H1 (cell line): ENCODE measurements at regions of chr12 and their contacts with region 1.

Region 1: DNA sequence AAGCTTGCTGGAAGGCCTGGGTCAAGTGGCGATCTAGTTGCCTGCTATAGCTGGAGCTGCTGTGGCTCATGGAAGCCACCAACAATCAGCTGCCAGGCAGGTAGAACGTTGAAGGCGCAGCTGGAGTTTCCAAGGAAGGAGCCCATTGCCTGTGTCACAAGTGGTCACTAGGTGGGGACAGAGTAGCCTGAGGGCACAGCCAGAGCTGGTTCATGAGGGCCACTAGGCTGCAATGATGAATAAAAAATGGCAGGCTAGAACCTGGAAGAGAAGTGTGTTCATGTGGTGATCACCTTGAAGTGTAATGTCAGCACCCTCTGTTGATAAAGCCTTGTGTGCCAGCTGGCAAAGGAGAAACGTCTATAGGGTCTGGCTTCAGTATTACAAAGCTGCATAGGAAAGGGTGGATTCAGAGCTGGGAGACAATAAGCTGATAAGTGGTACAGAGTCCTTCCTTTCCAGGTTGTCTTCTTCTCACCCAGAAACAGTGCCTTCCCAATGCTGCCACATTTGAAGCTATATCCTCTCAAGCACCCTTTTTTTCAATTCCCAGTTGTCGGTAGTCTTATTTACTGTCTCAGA is 165.8 kb downstream of the EMP1 start:
- DNase-seq: peak; percentile 49 to 84
- H3K4me3 ChIP-seq: no peak overlapping the region
- H3K27ac ChIP-seq: no peak overlapping the region
- H3K4me1 ChIP-seq: no peaks in the 10 kb centered on the region
- H3K27me3 ChIP-seq: no peaks in the 10 kb centered on the region
- CTCF ChIP-seq: peak; percentile 84 to 96 (median 92)
- EP300 ChIP-seq: no peak
- POLR2A ChIP-seq: no peak
- RAD21 ChIP-seq: peak; percentile 80 to 89

Region 2: DNA sequence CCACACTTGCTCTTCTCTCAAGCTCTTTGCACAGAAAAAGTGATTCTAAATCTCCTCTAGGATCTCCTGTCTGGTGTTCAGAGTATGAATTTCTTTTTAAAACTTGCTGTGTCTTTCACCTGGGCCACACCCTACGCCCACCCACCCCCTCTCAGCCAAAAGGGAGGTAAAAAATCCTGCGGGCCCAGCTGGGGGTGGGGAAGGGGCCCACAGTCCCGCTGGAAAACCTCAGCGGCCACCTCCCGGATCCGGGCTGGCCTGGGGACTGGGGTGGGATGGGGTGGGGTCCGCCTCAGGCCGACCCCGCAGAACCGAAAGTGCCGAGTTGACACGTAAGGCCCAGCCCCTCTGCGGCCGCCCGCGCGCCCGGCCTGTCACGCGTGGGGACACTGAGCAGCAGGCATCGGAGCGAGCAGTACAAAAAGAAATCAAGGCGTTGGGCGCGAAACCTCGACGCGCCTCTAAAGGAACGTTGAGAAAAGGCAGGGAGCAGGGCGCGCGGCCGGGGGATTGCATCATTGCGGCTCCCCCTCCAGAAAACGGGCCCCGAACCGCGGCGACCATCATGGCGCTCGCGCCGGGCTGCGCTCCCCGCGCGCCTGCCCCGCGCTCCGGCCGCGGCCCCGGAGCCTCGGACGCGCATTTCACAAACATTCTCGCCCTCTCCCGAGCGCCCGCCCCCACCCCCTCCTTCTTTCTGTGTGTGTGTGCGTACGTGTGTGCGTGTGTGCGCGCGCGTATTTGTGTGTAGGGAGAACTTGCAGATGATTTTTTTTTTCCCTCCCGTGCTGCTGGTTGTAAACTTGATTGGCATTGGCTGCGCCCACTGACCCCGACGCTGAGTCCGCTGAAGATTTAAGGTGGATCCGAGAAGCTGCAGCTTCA is 637.4 kb before region 1 on chr12:
- CTCF ChIA-PET with region 1: no interaction called
- POLR2A ChIA-PET with region 1: no interaction called
- DNase-seq: peak in 1 of 2 experiments; percentile 84
- H3K4me3 ChIP-seq: peak overlapping the region; percentile 74 to 98 (median 88)
- H3K27ac ChIP-seq: peak overlapping the region; percentile 88
- H3K4me1 ChIP-seq: peaks cover 0 to 8% (median 0%) of the 10 kb centered on the region in 4 experiments; a peak in 4 of 7 replicates
- H3K27me3 ChIP-seq: peaks cover 0 to 2% (median 0%) of the 10 kb centered on the region in 4 experiments; a peak in 1 of 7 replicates
- CTCF ChIP-seq: peak in 1 of 3 experiments; percentile 8; a peak in 1 of 4 replicates
- EP300 ChIP-seq: peak in 1 of 2 experiments; percentile 41; a peak in 1 of 3 replicates
- POLR2A ChIP-seq: peak; percentile 59 to 90
- RAD21 ChIP-seq: no peak

Region 3: DNA sequence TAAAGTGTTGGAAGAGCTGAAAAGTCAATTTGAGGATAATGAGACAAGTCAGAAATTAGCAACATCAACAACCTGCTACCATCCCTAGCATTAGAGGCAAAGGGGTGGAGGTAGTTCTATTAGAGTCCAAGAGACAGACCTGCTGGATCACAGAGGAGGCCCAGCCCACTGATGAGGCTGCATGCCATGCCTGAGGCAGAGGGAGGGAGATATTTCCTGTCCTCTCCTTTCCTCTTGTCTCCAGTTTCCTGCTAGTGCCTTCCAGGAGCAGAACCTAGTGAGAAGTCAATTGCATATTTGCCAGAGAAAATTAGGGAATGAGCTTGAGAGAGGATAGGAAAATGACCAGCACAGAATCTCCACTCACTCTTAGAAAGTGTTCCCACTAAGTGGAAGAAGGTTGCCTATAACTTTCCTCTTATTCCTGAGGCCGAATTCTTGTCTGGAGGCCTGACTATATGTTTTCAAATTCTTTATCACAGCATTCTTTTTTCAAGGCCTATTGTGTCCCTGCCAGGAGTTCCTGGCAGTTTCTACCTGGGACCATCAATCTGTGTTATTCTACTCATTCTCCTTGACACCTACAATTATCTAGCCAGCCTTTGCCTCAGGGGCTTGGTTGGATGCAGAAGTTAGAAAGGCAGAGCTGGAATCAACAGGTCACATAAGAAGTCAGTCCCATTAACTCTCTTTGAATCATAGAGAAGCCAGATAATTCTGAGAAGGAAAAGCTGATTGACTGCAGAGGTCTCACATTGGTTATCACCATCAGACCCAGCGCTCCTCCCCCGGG is 43.9 kb before region 1 on chr12:
- CTCF ChIA-PET with region 1: interaction called, 13 read pairs
- POLR2A ChIA-PET with region 1: no interaction called
- DNase-seq: no peak
- H3K4me3 ChIP-seq: no peak overlapping the region
- H3K27ac ChIP-seq: no peak overlapping the region
- H3K4me1 ChIP-seq: peaks cover 1 to 6% (median 4%) of the 10 kb centered on the region in 4 experiments; a peak in 3 of 7 replicates
- H3K27me3 ChIP-seq: peaks cover 0 to 1% (median 0%) of the 10 kb centered on the region in 4 experiments; a peak in 1 of 7 replicates
- CTCF ChIP-seq: no peak
- EP300 ChIP-seq: no peak
- POLR2A ChIP-seq: no peak
- RAD21 ChIP-seq: no peak

Region 4: GRCh38 chr12:13328535-13328934 is 33.8 kb before region 1 on chr12:
- CTCF ChIA-PET with region 1: interaction called, 11 read pairs
- POLR2A ChIA-PET with region 1: no interaction called
- DNase-seq: no peak
- H3K4me3 ChIP-seq: no peak overlapping the region
- H3K27ac ChIP-seq: no peak overlapping the region
- H3K4me1 ChIP-seq: no peaks in the 10 kb centered on the region
- H3K27me3 ChIP-seq: no peaks in the 10 kb centered on the region
- CTCF ChIP-seq: no peak
- EP300 ChIP-seq: no peak
- POLR2A ChIP-seq: no peak
- RAD21 ChIP-seq: no peak

Region 5: GRCh38 chr12:13347241-13348043 is 14.9 kb before region 1 on chr12:
- CTCF ChIA-PET with region 1: interaction called, 14 read pairs
- POLR2A ChIA-PET with region 1: no interaction called
- DNase-seq: no peak
- H3K4me3 ChIP-seq: no peak overlapping the region
- H3K27ac ChIP-seq: no peak overlapping the region
- H3K4me1 ChIP-seq: no peaks in the 10 kb centered on the region
- H3K27me3 ChIP-seq: no peaks in the 10 kb centered on the region
- CTCF ChIP-seq: no peak
- EP300 ChIP-seq: no peak
- POLR2A ChIP-seq: no peak
- RAD21 ChIP-seq: no peak

Region 6: GRCh38 chr12:13374793-13375192 is 12.4 kb after region 1 on chr12:
- CTCF ChIA-PET with region 1: interaction called, 33 read pairs
- POLR2A ChIA-PET with region 1: no interaction called
- DNase-seq: peak in 1 of 2 experiments; percentile 14
- H3K4me3 ChIP-seq: no peak overlapping the region
- H3K27ac ChIP-seq: no peak overlapping the region
- H3K4me1 ChIP-seq: peaks cover 0 to 2% (median 1%) of the 10 kb centered on the region in 4 experiments; a peak in 2 of 7 replicates
- H3K27me3 ChIP-seq: no peaks in the 10 kb centered on the region
- CTCF ChIP-seq: no peak
- EP300 ChIP-seq: no peak
- POLR2A ChIP-seq: no peak
- RAD21 ChIP-seq: no peak